Activated CD4-positive, alpha-beta T cell treated with anti-CD3 and anti-CD28 coated beads for 36 hours (primary cell): ENCODE measurements at regions of chr19 and their contacts with region 1.

Region 1: DNA sequence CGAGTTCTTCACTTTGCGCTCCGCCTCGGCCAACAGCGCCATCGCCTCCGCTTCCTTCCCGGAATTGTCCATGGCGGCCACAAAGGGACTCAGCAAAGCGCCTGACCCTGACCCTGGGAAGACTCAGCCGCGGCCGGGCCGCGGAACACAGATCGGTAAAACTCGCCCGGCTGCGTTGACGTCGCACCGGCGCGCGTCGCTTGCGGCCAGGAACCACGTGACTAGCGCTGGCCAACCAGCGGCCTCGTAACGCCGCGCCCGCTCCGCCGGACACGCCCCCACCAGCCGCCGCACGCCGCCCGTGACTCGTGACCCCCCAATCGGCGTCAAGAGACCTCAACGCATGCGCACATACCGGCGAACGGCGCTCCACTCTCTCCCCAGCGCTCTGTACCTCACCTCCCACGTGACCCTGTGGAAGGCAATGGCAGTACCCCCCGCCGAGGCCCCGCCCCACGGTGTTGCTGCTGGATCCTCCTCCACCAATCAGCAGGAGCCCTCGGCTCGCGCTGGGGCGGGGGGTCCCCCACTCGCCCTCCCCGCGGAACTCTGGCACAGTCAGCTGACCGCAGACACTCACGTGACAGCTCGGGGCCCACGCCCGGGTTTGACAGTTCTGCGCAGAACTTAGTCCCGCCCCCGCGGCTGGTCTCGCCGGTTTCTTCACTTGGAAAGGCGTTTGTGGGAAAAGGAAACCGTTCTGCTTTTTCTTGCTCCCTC is at the start of gene NAPA:
- DNase-seq: peak; percentile 100
- ATAC-seq: peak; percentile 98
- H3K4me3 Mint-ChIP-seq: peak within 1 kb of the TSS; percentile 95
- H3K27ac Mint-ChIP-seq: peak within 1 kb of the TSS; percentile 99
- H3K4me1 Mint-ChIP-seq: peaks cover 76% of the 10 kb centered on the region
- H3K27me3 Mint-ChIP-seq: no peaks in the 10 kb centered on the region
- total RNA-seq, gene NAPA: 54.2 to 68.8 TPM

Region 2: GRCh38 chr19:47436712-47437401 is 78.2 kb before region 1 on chr19:
- CTCF ChIA-PET with region 1: interaction called, 11 read pairs
- POLR2A ChIA-PET with region 1: no interaction called
- intact Hi-C with region 1: loop called (anchors 1 to 2 kb)
- DNase-seq: peak; percentile 92
- ATAC-seq: peak; percentile 91
- H3K4me3 Mint-ChIP-seq: no peak overlapping the region
- H3K27ac Mint-ChIP-seq: no peak overlapping the region
- H3K4me1 Mint-ChIP-seq: peaks cover 17% of the 10 kb centered on the region
- H3K27me3 Mint-ChIP-seq: peaks cover 38% of the 10 kb centered on the region

Region 3: DNA sequence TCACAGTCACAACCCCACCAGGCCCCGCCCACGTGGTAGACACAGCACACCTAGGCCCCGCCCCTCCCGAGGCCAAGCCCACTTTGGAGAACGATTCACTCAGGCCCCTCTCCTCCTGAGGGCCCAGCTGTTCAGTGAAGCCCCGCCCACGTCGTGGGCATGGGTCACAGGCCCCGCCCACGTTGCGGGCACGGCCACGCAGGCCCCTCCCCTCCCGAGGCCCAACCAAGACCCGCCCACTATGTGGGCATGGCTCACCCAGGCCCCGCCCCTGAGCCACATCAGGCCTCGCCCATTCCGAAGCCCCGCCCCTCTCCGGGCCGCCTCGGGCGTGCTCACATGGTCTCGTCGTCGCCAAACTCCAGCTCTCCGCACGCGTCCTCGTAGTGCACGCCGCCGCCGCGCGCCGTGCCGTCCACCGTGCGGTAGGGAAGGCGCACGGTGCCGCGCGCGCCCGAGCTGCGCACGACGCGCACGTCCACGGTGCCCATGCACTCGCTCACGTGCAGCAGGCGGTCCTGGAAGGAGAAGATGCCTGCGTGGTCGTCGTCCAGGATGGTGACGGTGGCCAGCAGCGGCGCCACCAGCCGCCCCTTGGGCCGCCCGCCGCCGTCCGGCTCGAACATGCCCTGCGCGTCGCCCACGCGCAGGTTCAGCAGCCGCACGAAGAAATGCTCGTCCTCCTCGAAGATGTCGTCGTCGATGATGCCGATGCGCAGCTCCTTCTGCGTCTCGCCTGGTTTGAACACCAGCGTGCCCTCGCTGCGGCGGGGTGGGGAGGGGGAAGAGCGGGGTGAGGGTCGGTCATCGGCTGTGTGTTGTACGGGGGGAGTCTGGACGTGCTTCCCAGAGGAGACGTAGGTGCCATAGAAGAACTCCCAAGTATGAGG is 67.3 kb before region 1 on chr19:
- CTCF ChIA-PET with region 1: interaction called, 3 read pairs
- POLR2A ChIA-PET with region 1: no interaction called
- intact Hi-C with region 1: loop called in 1 of 2 experiments (anchors 1 kb)
- DNase-seq: peak; percentile 90
- ATAC-seq: peak; percentile 85
- H3K4me3 Mint-ChIP-seq: peak overlapping the region; percentile 1
- H3K27ac Mint-ChIP-seq: no peak overlapping the region
- H3K4me1 Mint-ChIP-seq: peaks cover 44% of the 10 kb centered on the region
- H3K27me3 Mint-ChIP-seq: peaks cover 56% of the 10 kb centered on the region

Region 4: GRCh38 chr19:47600246-47601179 is 85.5 kb after region 1 on chr19:
- CTCF ChIA-PET with region 1: interaction called, 4 read pairs
- POLR2A ChIA-PET with region 1: no interaction called
- intact Hi-C with region 1: loop called (anchors 1 kb)
- DNase-seq: peak; percentile 100
- ATAC-seq: peak; percentile 98
- H3K4me3 Mint-ChIP-seq: peak overlapping the region; percentile 79
- H3K27ac Mint-ChIP-seq: peak overlapping the region; percentile 89
- H3K4me1 Mint-ChIP-seq: peaks cover 31% of the 10 kb centered on the region
- H3K27me3 Mint-ChIP-seq: no peaks in the 10 kb centered on the region

Region 5: GRCh38 chr19:47608074-47608918 is 93.3 kb after region 1 on chr19:
- CTCF ChIA-PET with region 1: interaction called, 5 read pairs
- POLR2A ChIA-PET with region 1: interaction called, 3 read pairs
- intact Hi-C with region 1: loop called (anchors 1 kb)
- DNase-seq: peak; percentile 97
- ATAC-seq: peak; percentile 93
- H3K4me3 Mint-ChIP-seq: peak overlapping the region; percentile 79
- H3K27ac Mint-ChIP-seq: peak overlapping the region; percentile 72
- H3K4me1 Mint-ChIP-seq: peaks cover 27% of the 10 kb centered on the region
- H3K27me3 Mint-ChIP-seq: no peaks in the 10 kb centered on the region

Region 6: GRCh38 chr19:47697863-47698609 is 183.0 kb after region 1 on chr19:
- CTCF ChIA-PET with region 1: interaction called, 5 read pairs
- POLR2A ChIA-PET with region 1: no interaction called
- intact Hi-C with region 1: loop called (anchors 1 to 10 kb)
- DNase-seq: peak; percentile 80
- ATAC-seq: peak; percentile 88
- H3K4me3 Mint-ChIP-seq: no peak overlapping the region
- H3K27ac Mint-ChIP-seq: peak overlapping the region; percentile 37
- H3K4me1 Mint-ChIP-seq: no peaks in the 10 kb centered on the region
- H3K27me3 Mint-ChIP-seq: no peaks in the 10 kb centered on the region

Region 7: DNA sequence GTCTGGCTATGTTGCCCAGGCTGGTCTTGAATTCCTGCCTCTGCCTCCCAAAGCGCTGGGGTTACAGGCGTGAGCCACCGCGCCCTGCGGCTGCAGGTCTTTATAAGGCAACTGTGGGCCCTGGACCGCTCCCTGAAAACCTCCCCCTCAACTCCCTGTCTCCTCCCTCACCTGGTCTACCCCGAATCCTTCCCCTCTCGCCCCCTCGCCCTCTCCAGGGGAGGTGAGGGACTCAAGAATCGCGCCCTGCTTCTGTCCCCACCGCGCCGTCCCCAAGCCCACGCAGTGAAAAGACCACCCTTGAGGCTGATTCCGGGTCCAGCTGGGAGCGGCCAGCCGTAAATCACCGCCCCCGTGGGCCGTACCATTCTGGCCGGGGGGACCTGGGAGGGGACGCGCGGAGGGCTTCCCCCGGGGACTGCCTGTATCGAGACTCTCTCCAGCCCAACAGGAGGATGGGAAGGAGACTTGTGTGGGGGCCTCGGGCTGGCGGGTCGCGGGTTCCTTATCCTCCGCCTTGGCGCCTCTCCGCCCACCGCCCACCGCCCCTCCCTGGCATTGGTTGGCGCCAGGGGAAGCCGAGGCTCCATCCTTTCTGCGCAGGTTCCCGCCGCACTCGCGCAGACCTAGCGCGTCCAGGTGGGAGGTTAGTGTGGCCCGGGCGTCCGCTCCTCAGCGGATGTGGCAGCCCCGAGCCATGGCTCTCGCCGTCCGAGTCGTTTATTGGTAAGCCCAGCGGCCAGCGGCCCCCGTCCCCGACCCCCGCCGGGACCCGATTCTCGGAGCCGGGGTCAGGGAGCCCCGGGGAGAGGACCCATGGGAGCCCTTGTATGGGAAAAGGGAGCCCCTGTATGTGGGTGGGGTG is 263.3 kb after region 1 on chr19 and contains the start of gene SELENOW:
- CTCF ChIA-PET with region 1: no interaction called
- POLR2A ChIA-PET with region 1: no interaction called
- intact Hi-C with region 1: loop called in 1 of 2 experiments (anchors 1 kb)
- DNase-seq: peak; percentile 87
- ATAC-seq: peak; percentile 92
- H3K4me3 Mint-ChIP-seq: peak within 1 kb of the TSS; percentile 95
- H3K27ac Mint-ChIP-seq: peak within 1 kb of the TSS; percentile 92
- H3K4me1 Mint-ChIP-seq: peaks cover 20% of the 10 kb centered on the region
- H3K27me3 Mint-ChIP-seq: no peaks in the 10 kb centered on the region
- total RNA-seq, gene SELENOW: 150 to 178 TPM

Region 8: GRCh38 chr19:48734625-48735555 is 1219.9 kb after region 1 on chr19:
- CTCF ChIA-PET with region 1: no interaction called
- POLR2A ChIA-PET with region 1: no interaction called
- intact Hi-C with region 1: no loop called
- DNase-seq: no peak
- ATAC-seq: no peak
- H3K4me3 Mint-ChIP-seq: no peak overlapping the region
- H3K27ac Mint-ChIP-seq: no peak overlapping the region
- H3K4me1 Mint-ChIP-seq: peaks cover 6% of the 10 kb centered on the region
- H3K27me3 Mint-ChIP-seq: peaks cover 2% of the 10 kb centered on the region